ENCODE measurements at regions of chr10 and their contacts with region 1.

Region 1: DNA sequence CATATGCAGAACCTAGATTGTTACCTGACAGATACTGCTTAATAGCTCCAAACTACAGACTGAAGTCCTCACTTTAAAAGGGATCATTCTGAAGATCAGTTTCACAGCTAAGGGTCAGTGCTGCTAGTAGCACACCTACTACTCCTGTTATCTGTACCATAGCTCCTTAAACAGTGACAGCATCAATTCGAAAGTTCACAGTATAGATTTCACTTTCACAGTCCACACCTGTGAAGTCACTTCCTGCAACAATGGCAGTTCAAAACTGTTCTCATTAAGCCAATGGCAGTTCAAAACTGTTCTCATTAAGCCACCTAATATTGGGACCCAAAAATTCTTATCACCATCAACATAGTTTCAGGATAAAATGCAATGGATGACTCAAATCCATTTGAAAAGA is 10.7 kb upstream of the FHIP2A start:
- DNase-seq: no peak
- H3K4me3 Mint-ChIP-seq: no peak overlapping the region
- H3K27ac Mint-ChIP-seq: no peak overlapping the region
- H3K4me1 Mint-ChIP-seq: peaks cover 6% of the 10 kb centered on the region
- H3K27me3 Mint-ChIP-seq: no peaks in the 10 kb centered on the region
- CTCF ChIP-seq: no peak

Region 2: GRCh38 chr10:114821293-114821914 is 10.5 kb after region 1 on chr10 and contains the start of gene FHIP2A:
- CTCF ChIA-PET with region 1: interaction called, 12 read pairs
- POLR2A ChIA-PET with region 1: interaction called, 9 read pairs
- intact Hi-C with region 1: no loop called
- DNase-seq: peak; percentile 71
- H3K4me3 Mint-ChIP-seq: peak within 1 kb of the TSS; percentile 85
- H3K27ac Mint-ChIP-seq: peak within 1 kb of the TSS; percentile 97
- H3K4me1 Mint-ChIP-seq: peaks cover 20% of the 10 kb centered on the region
- H3K27me3 Mint-ChIP-seq: no peaks in the 10 kb centered on the region
- CTCF ChIP-seq: peak; percentile 34
- total RNA-seq, gene FHIP2A: 17.2 and 25.9 TPM in 2 replicates

Region 3: DNA sequence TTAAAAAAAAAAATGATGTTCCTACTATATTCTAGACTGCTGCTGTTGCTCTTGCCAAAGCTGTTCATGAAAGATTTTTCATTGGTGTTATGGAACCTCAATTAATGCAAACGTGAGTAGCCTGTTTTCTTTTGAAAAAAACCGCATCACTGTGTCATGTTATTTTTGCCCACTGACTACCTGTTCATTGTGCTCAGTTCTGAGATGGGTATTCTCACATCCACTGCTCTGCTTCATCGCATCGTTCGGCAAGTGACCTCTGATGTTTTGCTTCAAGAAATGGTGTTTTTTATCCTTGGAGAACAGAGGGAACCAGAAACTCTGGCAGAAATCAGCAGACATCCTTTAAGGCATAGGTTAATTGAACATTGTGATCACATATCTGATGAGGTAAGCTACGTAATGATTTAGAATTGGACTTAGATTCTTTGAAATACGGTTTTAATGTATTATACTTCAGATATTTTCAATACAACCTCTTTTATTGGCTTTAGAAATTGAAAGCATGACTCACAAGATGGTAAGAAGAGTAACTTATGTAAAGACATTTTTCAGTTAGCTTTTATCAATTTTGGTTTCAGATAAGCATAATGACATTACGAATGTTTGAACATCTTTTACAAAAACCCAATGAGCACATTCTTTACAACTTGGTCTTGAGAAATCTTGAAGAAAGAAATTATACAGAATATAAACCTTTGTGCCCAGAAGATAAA is 35.2 kb after region 1 on chr10:
- CTCF ChIA-PET with region 1: no interaction called
- POLR2A ChIA-PET with region 1: no interaction called
- intact Hi-C with region 1: no loop called
- DNase-seq: no peak
- H3K4me3 Mint-ChIP-seq: no peak overlapping the region
- H3K27ac Mint-ChIP-seq: no peak overlapping the region
- H3K4me1 Mint-ChIP-seq: no peaks in the 10 kb centered on the region
- H3K27me3 Mint-ChIP-seq: no peaks in the 10 kb centered on the region
- CTCF ChIP-seq: no peak

Measured in MCF 10A (cell line).